WTC11 (cell line): ENCODE measurements at regions of chr14 and their contacts with region 1.

Region 1: GRCh38 chr14:35861204-35861868 is 35.2 kb downstream of the BRMS1L start:
- DNase-seq: no peak
- ATAC-seq: no peak
- H3K4me3 Mint-ChIP-seq: no peak overlapping the region
- H3K27ac Mint-ChIP-seq: no peak overlapping the region
- H3K4me1 Mint-ChIP-seq: no peaks in the 10 kb centered on the region
- H3K27me3 Mint-ChIP-seq: no peaks in the 10 kb centered on the region
- CTCF ChIP-seq: no peak

Region 2: GRCh38 chr14:35890308-35890707 is 29.0 kb after region 1 on chr14:
- CTCF ChIA-PET with region 1: no interaction called
- POLR2A ChIA-PET with region 1: interaction called, 10 read pairs
- DNase-seq: no peak
- ATAC-seq: no peak
- H3K4me3 Mint-ChIP-seq: no peak overlapping the region
- H3K27ac Mint-ChIP-seq: no peak overlapping the region
- H3K4me1 Mint-ChIP-seq: no peaks in the 10 kb centered on the region
- H3K27me3 Mint-ChIP-seq: peaks cover 5% of the 10 kb centered on the region; the same call in 1 of the 2 replicates
- CTCF ChIP-seq: no peak